Panc1 (cell line): ENCODE measurements at regions of chr1 and their contacts with region 1.

Region 1: GRCh38 chr1:161166669-161167548 is 683 bp downstream of the PPOX start:
- DNase-seq: no peak
- ATAC-seq: no peak; the same call in 1 of the 2 replicates
- H3K4me3 ChIP-seq: peak overlapping the region; percentile 83 to 88
- H3K27ac ChIP-seq: peak overlapping the region; percentile 89
- H3K4me1 ChIP-seq: peaks cover 16% of the 10 kb centered on the region
- H3K27me3 ChIP-seq: no peaks in the 10 kb centered on the region
- CTCF ChIP-seq: no peak

Region 2: DNA sequence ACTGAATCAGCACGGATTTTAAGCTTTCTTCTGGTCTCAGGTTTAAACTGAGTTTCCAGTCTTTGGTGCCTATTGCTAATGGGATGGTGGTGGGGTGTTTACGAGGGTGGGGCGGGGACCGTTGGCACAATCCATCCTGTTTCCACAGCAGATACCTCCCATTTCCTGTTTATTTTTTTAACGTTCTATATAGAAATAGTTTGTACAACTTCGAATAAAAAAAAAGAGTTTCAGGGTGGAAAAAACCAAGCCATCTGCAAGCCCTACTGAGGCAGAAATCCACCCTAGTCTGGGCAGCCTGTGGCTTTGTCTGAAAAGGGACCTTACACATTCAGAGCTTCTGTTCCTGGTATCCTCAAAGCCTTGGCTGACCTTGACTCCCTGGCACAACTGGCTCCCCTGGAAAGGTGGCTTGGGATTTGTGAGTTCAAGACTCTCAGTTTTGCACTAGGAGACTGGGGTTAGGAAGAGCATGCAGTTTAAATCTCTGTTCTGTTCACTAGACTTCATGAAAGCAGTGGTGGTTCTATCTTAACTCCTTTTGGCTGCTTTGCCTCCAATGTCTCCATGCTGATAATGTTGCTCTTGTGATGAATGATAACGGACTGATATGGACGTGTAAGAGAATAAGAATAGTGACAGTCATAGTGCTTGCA is 719.8 kb before region 1 on chr1:
- CTCF ChIA-PET with region 1: no interaction called
- POLR2A ChIA-PET with region 1: interaction called, 22 read pairs
- in situ Hi-C with region 1: no loop called
- intact Hi-C with region 1: no loop called
- DNase-seq: no peak
- ATAC-seq: no peak
- H3K4me3 ChIP-seq: no peak overlapping the region
- H3K27ac ChIP-seq: no peak overlapping the region
- H3K4me1 ChIP-seq: no peaks in the 10 kb centered on the region
- H3K27me3 ChIP-seq: no peaks in the 10 kb centered on the region; the same call in 1 of the 2 replicates
- CTCF ChIP-seq: no peak

Region 3: GRCh38 chr1:161192476-161193465 is 25.9 kb after region 1 on chr1:
- CTCF ChIA-PET with region 1: no interaction called
- POLR2A ChIA-PET with region 1: no interaction called
- in situ Hi-C with region 1: no loop called
- intact Hi-C with region 1: no loop called
- DNase-seq: no peak
- ATAC-seq: peak; percentile 86
- H3K4me3 ChIP-seq: no peak overlapping the region
- H3K27ac ChIP-seq: no peak overlapping the region
- H3K4me1 ChIP-seq: no peaks in the 10 kb centered on the region
- H3K27me3 ChIP-seq: no peaks in the 10 kb centered on the region
- CTCF ChIP-seq: peak; percentile 96

Region 4: DNA sequence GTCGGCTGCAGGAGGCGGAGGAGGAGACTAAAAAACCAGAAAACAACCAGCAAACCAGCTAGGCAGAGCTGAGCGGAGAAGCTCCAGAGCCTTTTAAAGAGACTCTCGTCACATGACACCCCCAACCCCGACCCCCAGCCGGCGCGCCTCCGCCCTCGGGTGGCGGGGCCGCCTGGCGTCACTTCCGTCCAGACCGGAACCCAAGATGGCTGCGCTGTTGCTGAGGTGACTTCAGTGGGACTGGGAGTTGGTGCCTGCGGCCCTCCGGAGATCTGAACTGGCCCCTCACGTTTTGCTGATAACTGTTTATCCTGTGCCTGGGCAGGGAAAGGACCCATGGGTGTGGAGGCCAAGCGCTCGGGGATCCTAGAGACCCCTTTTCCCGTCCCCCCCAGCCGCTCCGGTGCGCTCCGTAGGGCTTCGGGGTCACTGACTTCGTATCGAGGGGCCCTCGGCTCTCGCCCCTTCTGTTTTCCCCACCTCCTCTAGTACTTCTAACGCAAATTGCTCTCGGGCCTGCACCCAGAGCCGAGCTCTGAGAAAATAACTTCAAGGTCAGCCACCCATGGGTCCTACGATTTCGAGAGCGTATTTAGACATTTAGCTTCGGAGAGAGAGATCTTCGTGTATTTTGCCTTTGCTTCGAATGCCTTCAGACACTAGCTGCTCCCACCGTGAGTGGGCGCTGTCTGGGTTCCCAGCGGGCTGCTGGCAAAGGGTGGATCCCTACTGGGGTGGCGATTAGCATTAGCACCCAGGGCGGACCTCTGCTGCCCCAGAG is 147.5 kb after region 1 on chr1 and contains the start of gene SDHC:
- CTCF ChIA-PET with region 1: interaction called, 11 read pairs
- POLR2A ChIA-PET with region 1: no interaction called
- in situ Hi-C with region 1: no loop called
- intact Hi-C with region 1: no loop called
- DNase-seq: peak; percentile 61
- ATAC-seq: peak; percentile 98
- H3K4me3 ChIP-seq: peak within 1 kb of the TSS; percentile 92 to 94
- H3K27ac ChIP-seq: peak within 1 kb of the TSS; percentile 97
- H3K4me1 ChIP-seq: peaks cover 8% of the 10 kb centered on the region
- H3K27me3 ChIP-seq: no peaks in the 10 kb centered on the region
- CTCF ChIP-seq: no peak
- total RNA-seq, gene SDHC: 221 TPM